Heart right ventricle (tissue), 16 donors: ENCODE measurements at regions of chr13 and their contacts with region 1.

Region 1: GRCh38 chr13:24192057-24192810 is 31.7 kb downstream of the SPATA13 start:
- DNase-seq: no peak
- ATAC-seq: no peak
- H3K4me3 ChIP-seq: no peak overlapping the region
- H3K27ac ChIP-seq: no peak overlapping the region
- H3K4me1 ChIP-seq: peaks cover 0 to 7% (median 0%) of the 10 kb centered on the region in 9 donors
- H3K27me3 ChIP-seq: no peaks in the 10 kb centered on the region
- CTCF ChIP-seq: no peak

Region 2: DNA sequence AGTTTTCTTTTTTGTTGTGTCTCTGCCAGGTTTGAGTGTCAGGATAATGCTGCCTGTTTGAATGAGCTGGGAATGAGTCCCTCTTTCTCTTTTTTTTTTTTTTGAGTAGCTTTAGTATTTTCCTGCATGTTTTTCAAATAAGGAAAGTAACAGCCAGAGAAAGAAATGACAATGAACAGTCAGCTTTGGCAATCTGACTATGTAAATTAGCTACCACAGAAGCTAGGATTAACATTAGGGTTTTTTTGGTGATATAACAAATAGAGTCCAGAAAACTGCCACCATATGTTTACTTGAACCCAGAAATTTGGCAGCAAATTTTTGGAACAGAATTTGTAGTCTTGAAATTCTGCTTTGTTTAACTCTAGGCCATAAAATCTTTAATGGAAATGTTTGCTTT is 961.0 kb before region 1 on chr13:
- intact Hi-C with region 1: loop called in 1 of 10 experiments (anchors 10 kb)
- DNase-seq: no peak
- ATAC-seq: no peak
- H3K4me3 ChIP-seq: no peak overlapping the region
- H3K27ac ChIP-seq: no peak overlapping the region
- H3K4me1 ChIP-seq: no peaks in the 10 kb centered on the region
- H3K27me3 ChIP-seq: no peaks in the 10 kb centered on the region
- CTCF ChIP-seq: no peak